ENCODE measurements at regions of chr3 and their contacts with region 1.

Region 1: DNA sequence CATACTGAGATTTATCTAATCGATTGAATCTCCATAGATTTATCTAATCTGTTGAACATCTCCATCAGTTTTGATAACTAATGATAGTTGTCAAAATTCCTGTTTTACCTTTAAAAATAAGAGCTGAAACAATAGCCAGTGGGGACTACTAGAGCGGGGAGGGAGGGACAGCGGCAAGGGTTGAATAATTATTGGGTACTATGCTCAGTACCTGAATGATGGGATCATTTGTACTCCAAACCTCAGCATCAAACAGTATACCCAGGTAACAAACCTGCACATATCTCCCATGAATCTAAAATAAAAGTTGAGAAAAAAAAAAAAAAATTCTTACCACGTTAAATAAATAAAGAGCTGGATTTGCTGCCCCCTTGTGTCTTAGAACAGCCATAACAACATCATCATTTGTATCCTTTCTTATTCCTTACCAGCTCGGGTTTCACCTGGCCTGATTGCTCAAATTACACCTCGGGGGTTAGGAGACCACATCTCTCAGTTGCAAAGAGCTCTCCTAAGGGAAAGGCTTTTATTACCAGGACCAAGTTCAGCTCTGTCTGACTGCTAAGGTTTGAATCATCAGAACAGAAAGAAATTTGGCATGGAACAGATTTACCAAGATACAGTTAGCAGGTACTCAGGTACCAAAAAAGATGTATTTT is 25.7 kb upstream of the RPL39L start:
- DNase-seq: peak; percentile 74
- H3K4me3 ChIP-seq: no peak overlapping the region
- H3K27ac ChIP-seq: no peak overlapping the region
- H3K4me1 ChIP-seq: peaks cover 4% of the 10 kb centered on the region
- H3K27me3 ChIP-seq: no peaks in the 10 kb centered on the region
- CTCF ChIP-seq: peak; percentile 81

Region 2: DNA sequence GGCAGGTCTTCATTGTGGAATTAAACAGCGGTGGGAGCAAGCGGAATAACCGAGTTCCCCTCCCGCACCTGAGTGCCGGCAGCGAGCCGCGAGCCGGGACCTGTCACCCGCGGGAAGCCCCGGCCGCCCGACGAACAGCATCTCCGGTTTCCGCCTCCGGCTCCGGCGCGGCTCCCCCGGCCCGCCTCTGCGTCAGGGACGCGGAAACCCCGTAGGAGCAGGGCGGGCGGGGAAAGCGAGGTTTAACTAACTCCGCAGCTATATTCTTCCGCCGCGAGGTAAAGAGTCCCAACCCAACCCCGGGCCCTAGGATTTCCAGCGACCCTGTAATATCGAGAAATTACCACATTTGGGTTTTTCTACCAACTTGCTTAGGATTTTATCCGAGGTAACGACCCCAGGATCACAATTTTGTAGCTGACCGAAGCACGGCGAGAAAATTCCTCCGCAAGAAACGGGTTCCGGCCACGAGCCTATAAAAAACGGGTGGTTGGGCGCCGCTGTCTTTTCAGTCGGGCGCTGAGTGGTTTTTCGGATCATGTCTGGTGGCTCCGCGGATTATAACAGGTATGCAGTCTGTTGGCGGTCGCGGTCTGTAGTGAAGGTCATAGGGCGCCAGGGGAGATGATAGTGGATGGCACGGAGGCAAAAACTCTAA is 381.8 kb before region 1 on chr3 and contains the start of gene EIF4A2:
- CTCF ChIA-PET with region 1: no interaction called
- POLR2A ChIA-PET with region 1: interaction called, 10 read pairs
- intact Hi-C with region 1: no loop called
- DNase-seq: peak; percentile 95
- H3K4me3 ChIP-seq: peak within 1 kb of the TSS; percentile 77
- H3K27ac ChIP-seq: peak within 1 kb of the TSS; percentile 98
- H3K4me1 ChIP-seq: peaks cover 21% of the 10 kb centered on the region
- H3K27me3 ChIP-seq: no peaks in the 10 kb centered on the region
- CTCF ChIP-seq: no peak
- total RNA-seq, gene EIF4A2: 403 and 435 TPM in 2 replicates

Region 3: DNA sequence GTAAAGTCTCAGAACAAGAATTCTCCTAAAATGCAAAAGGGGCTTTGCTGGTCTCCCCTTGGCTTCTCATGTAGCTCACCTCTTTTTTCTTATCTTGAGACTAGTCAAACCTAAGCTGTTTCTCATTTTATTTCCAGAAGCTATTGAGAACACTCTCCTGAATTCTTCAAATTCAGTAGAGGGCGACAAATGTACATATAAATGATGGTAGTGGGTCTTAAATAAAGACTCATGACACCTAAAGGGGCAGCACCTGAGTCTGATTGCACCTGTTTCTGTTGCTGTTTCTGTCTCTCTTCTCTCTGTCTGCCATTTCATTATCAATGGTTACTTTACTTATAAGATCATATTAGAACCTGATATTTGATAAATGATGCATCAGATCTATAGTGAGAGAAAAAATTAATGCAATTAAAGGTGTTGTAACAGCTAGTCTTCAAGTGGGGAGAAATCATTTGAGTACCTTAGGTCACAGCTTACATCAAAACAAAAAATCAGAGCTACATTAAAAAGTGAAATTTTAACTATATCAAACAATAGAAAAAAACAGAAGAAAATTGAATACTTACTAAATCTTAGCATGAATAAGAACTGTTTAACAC is 315.5 kb before region 1 on chr3:
- CTCF ChIA-PET with region 1: interaction called, 59 read pairs
- POLR2A ChIA-PET with region 1: no interaction called
- intact Hi-C with region 1: loop called (anchors 1 kb)
- DNase-seq: peak; percentile 67
- H3K4me3 ChIP-seq: no peak overlapping the region
- H3K27ac ChIP-seq: no peak overlapping the region
- H3K4me1 ChIP-seq: peaks cover 22% of the 10 kb centered on the region
- H3K27me3 ChIP-seq: no peaks in the 10 kb centered on the region
- CTCF ChIP-seq: peak; percentile 71

Region 4: DNA sequence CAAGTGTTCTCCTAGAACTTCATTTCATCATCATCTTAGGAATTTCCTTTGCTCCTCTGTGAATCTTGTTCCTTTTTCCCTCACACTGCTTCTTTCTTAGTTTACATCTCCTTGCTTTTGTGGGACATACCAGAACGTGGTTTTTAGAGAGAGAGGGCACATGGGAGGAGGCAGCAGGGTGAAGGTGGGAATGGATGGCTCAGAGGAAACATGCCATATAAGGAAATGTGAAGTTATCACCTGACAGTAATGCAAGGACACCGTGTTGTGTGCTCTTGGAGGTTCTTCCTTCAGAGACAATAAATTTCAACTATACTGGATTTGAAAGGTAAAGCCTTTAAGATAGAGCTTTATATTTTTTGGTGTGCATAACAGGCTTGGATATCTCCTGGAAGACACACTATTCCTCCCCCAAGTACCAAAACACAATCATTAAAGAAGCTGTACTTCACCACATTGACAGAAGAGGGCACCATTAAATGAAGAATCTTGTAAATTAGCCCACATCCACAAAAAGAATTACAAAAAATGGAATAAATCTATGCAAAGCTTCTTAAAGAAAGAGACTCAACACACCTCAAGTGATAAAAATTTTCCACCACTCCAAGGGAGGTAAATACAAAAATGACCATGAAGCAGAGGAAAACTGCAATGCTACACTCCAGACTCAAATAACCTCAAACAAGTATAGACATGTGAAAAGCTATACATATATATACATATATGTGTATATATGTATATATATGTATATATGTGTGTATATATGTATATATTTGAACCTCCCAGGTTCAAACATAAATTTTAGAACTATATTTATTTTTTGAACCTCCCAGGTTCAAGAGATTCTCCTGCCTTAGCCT is 51.9 kb before region 1 on chr3:
- CTCF ChIA-PET with region 1: interaction called, 25 read pairs
- POLR2A ChIA-PET with region 1: no interaction called
- intact Hi-C with region 1: no loop called
- DNase-seq: peak; percentile 49
- H3K4me3 ChIP-seq: no peak overlapping the region
- H3K27ac ChIP-seq: peak overlapping the region; percentile 31
- H3K4me1 ChIP-seq: peaks cover 7% of the 10 kb centered on the region
- H3K27me3 ChIP-seq: no peaks in the 10 kb centered on the region
- CTCF ChIP-seq: peak; percentile 67

Region 5: DNA sequence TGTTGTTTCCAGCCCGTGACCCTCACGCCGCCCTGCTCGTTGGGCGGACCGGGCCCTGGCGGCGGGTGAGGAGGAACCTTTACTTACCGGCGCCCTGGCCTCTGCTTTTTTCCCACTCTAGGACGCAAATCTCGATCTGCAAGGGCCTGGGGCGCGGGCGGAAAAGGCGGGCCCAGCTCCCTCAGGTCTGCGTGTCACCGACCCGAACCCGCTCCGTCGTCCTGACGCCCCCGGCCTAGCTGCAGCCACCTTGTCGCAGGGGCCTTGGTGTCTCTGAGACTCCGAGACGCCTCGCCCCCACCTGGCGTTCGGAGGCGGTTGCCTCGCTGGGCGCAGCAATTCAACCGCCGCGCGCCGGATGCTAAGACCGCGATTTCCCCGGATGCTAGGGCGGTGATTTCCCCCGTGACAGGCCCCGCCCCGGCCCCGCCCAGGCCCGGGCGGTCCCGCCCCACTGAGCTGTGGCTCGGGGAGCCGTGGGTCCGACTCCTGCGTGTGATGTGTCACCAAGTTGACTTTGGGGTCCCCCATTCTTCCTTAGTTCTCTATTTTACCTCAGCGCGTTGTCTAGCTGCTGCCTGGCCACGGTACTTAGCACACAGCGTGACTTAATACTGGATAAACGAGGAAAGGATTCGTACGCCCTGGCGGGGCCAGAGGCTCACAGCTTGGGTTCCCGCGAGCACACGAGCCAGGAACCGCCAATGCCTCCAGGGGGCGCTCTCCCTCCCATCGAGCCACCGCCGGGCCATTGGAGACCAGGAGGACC is 25.7 kb before region 1 on chr3 and contains the start of gene RPL39L:
- CTCF ChIA-PET with region 1: interaction called, 14 read pairs
- POLR2A ChIA-PET with region 1: no interaction called
- intact Hi-C with region 1: no loop called
- DNase-seq: peak; percentile 95
- H3K4me3 ChIP-seq: peak within 1 kb of the TSS; percentile 65
- H3K27ac ChIP-seq: peak within 1 kb of the TSS; percentile 87
- H3K4me1 ChIP-seq: no peaks in the 10 kb centered on the region
- H3K27me3 ChIP-seq: no peaks in the 10 kb centered on the region
- CTCF ChIP-seq: peak; percentile 97
- total RNA-seq, gene RPL39L: 35.3 and 43.2 TPM in 2 replicates